Naive thymus-derived CD8-positive, alpha-beta T cell (primary cell): ENCODE measurements at regions of chr6 and their contacts with region 1.

Region 1: DNA sequence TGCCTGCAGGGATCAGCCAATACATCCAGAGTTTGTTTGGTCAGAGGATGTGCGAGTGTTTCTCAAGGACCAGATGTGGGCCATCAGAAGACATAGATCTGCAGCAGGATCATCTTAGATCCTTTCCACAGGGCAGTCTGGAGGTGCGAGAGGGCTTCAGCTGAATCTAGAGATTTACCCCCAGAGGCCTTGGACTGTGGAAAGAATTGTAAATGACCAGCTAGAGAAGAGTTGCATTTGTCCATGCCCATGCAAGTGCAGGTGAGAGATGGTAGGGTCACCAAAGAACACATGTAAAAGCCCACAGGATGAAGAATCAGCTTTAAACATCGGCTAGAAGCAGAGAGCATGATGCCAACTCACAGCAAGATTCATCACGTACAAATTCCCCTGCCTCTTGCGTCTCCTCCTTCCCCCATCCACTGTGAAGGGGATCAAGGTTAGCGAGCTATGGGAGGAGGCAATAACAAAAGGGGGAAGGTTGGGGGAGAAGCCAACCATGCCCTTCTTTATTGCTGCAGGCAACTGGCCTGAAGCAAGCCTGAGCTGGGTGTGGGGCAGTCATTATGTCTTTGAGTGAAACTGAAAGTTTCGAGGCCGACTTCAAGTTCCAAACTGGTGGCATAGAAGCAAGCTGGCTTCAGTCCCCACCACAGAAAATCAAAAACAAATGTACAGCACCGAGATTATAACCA is 83.5 kb downstream of the SCML4 start:
- DNase-seq: peak in 3 of 10 donors; percentile 14 to 50 (median 46)
- ATAC-seq: peak; percentile 5 to 20
- H3K4me3 Mint-ChIP-seq: peak overlapping the region; percentile 63 to 88 (median 82)
- H3K27ac Mint-ChIP-seq: peak overlapping the region; percentile 87 to 97 (median 94)
- H3K4me1 Mint-ChIP-seq: peaks cover 52 to 91% (median 78%) of the 10 kb centered on the region in 4 donors
- H3K27me3 Mint-ChIP-seq: no peaks in the 10 kb centered on the region

Region 2: DNA sequence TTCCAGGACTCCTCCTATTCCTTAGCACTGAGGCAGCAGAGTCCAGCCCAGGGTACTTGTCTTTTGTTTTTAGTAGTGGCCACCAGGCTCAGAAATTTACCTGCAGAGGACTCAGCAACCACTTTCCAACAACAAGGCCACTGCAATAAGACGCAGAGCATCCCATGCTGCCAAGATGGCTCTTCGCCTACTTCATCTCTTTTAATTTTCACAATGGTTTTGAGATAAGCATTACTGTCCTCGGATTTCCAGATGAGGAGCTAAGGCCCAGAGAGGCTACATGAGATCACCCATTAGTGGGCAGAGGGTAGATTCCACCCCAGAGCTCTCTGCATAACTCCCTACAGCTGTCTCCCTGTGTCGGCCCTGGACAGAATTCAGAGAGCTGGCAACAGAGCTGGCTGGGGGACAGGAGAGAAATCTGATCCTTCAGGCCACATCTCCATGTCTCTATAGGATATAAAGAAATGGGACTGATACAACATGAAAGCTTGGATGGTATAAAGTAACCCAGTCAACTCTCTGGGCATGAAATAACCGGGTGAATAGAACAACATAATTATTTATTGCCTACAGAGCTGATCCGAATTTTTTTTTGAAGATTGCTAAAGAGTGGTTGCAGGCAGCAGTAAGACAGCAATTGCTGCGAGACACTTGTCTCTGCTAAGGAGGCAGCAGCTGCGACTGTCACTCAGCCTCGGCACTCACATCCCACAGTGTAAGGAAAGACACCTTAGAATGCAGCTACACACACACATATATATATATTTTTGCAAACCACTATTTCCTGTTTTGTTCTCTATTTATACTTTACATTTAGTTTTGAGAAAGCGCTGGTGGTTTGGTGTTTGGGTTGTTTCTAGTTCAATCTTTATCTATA is 46.3 kb after region 1 on chr6:
- POLR2A ChIA-PET with region 1: interaction called, 34 read pairs
- DNase-seq: peak in 8 of 10 donors; percentile 20 to 71 (median 48)
- ATAC-seq: peak; percentile 71 to 82
- H3K4me3 Mint-ChIP-seq: peak overlapping the region; percentile 68 to 87 (median 82)
- H3K27ac Mint-ChIP-seq: peak overlapping the region; percentile 68 to 98 (median 95)
- H3K4me1 Mint-ChIP-seq: peaks cover 57 to 91% (median 87%) of the 10 kb centered on the region in 4 donors
- H3K27me3 Mint-ChIP-seq: no peaks in the 10 kb centered on the region